ENCODE measurements at regions of chr15 and their contacts with region 1.

Region 1: GRCh38 chr15:32743411-32744140 is 25.8 kb downstream of the GREM1 start:
- DNase-seq: no peak
- ATAC-seq: no peak
- H3K4me3 ChIP-seq: no peak overlapping the region
- H3K27ac ChIP-seq: no peak overlapping the region
- H3K4me1 ChIP-seq: no peaks in the 10 kb centered on the region
- H3K27me3 ChIP-seq: peaks cover 0 to 4% (median 0%) of the 10 kb centered on the region in 7 donors
- CTCF ChIP-seq: no peak

Region 2: GRCh38 chr15:32683906-32684584 is 59.5 kb before region 1 on chr15:
- intact Hi-C with region 1: loop called in 1 of 10 experiments (anchors 10 kb)
- DNase-seq: peak in 1 of 2 donors; percentile 13
- ATAC-seq: peak in 4 of 8 donors; percentile 24 to 78 (median 49)
- H3K4me3 ChIP-seq: no peak overlapping the region
- H3K27ac ChIP-seq: no peak overlapping the region
- H3K4me1 ChIP-seq: peaks cover 0 to 27% (median 0%) of the 10 kb centered on the region in 9 donors
- H3K27me3 ChIP-seq: peaks cover 0 to 5% (median 0%) of the 10 kb centered on the region in 7 donors
- CTCF ChIP-seq: no peak